Heart left ventricle (tissue), 16 donors: ENCODE measurements at regions of chr4 and their contacts with region 1.

Region 1: DNA sequence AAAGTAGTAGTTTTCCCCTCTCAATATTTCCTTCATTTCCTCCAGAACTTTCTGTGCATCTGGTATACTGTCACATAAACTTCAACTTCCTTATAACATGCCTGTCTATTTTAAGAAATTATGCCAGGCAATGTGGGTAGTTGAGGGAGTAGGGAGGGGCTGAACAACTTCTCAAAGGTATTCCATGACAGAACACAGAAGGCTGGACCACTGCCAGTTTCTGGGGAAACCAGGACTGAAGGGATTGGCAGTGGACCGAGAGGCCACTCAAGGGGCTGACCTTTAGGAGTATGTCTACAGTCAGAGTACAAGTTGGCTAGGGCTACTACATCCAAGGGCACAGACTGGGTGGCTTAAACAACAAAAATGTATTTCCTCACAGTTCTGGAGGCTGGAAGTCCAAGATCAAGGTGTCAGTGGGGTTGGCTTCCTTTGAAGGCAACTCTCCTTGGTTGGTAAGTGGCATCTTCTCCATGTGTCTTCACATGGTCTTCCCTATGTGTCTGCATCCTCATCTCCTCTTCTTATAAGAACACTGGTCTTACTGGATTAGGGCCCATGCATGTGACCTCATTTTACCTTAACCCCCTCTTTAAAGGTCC is 6.9 kb downstream of the SH3RF1 start:
- DNase-seq: peak in 4 of 5 donors; percentile 65 to 85 (median 78)
- ATAC-seq: peak; percentile 67 to 91 (median 86)
- H3K4me3 ChIP-seq: no peak overlapping the region
- H3K27ac ChIP-seq: peak overlapping the region in 3 of 12 donors; percentile 19 to 44 (median 27)
- H3K4me1 ChIP-seq: peaks cover 4 to 76% (median 47%) of the 10 kb centered on the region in 12 donors
- H3K27me3 ChIP-seq: no peaks in the 10 kb centered on the region
- CTCF ChIP-seq: no peak
- POLR2A ChIP-seq: no peak

Region 2: GRCh38 chr4:169205075-169205743 is 58.7 kb before region 1 on chr4:
- intact Hi-C with region 1: loop called in 1 of 10 experiments (anchors 5 kb)
- DNase-seq: no peak
- ATAC-seq: no peak
- H3K4me3 ChIP-seq: no peak overlapping the region
- H3K27ac ChIP-seq: no peak overlapping the region
- H3K4me1 ChIP-seq: peaks cover 0 to 65% (median 15%) of the 10 kb centered on the region in 12 donors
- H3K27me3 ChIP-seq: no peaks in the 10 kb centered on the region
- CTCF ChIP-seq: no peak
- POLR2A ChIP-seq: no peak